Psoas muscle (tissue), 8 donors: ENCODE measurements at regions of chr2 and their contacts with region 1.

Region 1: DNA sequence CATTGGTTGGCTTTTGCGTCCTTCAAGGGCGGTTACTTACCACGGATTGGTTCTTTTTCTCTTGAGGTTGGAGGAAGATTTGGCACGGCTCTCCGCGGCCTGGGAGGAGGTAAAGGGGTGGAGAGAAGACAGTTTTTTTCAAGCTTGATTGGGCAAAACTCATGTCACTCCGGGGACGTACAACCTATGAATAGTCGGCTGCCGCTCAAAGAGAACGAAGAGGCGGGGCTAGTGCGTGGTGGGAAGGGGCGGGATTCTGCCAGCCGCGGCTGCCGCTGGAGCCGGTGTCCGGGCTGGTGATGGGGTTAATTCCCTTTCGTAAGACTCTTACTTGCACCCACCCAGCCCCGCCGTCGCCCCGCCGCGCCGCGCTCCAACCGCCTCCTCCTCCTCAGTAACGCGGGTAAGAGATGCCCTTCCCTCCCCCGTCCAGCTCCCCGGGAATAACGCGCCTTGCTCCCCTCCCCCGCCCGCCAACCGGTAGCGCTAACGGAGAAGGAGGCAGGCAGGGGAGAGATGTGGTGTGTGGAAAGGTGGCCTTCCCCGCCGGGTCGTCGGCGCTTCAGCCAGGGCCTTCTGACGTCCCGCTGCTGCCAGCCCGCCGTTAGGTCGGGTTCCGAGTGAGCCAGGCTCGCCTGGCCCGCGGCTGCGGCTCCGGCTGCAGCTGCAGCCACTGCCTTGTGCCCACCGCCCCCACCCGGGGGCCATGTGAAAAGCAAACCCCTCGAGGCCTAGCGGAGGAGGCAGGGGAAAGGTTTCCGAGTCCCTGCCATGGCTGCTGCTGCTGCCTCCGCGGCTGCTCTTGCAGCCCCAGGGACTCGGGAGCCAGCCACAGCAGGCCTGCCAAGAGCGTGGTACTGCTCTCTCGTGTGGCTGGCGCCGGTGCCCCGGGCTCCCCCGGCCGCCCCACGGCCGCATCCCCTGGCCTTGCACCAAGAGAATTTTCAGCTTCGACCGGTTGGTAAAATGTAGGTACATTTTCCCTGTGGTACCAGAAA is at the start of gene R3HDM1:
- DNase-seq: peak; percentile 96 to 98
- ATAC-seq: peak; percentile 91 to 94 (median 92)
- H3K4me3 ChIP-seq: peak within 1 kb of the TSS; percentile 79
- H3K27ac ChIP-seq: peak within 1 kb of the TSS; percentile 97
- H3K4me1 ChIP-seq: peaks cover 17% of the 10 kb centered on the region
- H3K27me3 ChIP-seq: no peaks in the 10 kb centered on the region
- CTCF ChIP-seq: no peak
- total RNA-seq, gene R3HDM1: 17.5 to 25.3 (median 22.1) TPM

Region 2: DNA sequence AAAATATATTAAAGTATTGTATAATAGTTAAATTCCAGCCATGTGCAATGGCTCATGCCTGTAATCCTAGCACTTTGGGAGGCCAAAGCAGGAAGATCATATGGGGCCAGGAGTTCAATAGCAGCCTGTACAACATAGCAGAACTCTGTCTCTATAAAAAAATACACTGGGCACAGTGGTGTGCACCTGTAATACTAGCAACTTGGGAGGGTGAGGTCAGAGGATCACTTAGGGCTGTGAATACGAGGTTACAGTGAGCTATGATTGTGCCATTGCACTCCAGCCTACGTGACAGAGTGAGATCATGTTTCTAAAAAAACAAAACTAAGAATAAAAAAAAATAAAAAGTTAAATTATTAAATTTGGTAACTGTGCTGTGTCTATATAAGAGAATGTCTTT is 36.6 kb before region 1 on chr2:
- intact Hi-C with region 1: loop called in 1 of 2 experiments (anchors 5 kb)
- DNase-seq: no peak
- ATAC-seq: peak; percentile 94 to 98 (median 97)
- H3K4me3 ChIP-seq: no peak overlapping the region
- H3K27ac ChIP-seq: peak overlapping the region; percentile 88
- H3K4me1 ChIP-seq: peaks cover 7% of the 10 kb centered on the region
- H3K27me3 ChIP-seq: no peaks in the 10 kb centered on the region
- CTCF ChIP-seq: no peak

Region 3: DNA sequence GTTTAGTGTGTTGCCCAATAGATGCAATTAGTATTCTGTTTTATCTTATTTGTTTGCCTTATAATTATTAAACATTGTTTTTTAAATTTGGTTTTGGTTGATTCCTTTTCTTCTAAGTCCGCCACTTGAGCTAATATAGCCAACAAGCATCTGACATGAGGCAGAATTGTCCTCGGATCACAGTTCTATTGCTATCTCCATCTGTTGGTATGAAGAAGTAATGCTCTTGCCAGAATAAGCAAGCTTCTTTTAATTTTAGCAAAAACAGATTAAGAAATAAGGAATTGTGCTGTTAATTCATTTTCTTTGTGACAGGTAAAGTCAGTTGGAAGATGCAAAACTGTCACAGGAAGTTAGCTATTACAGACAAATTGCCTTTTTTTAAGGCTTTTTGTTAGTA is 54.1 kb after region 1 on chr2:
- intact Hi-C with region 1: loop called in 1 of 2 experiments (anchors 10 kb)
- DNase-seq: no peak
- ATAC-seq: no peak
- H3K4me3 ChIP-seq: no peak overlapping the region
- H3K27ac ChIP-seq: no peak overlapping the region
- H3K4me1 ChIP-seq: peaks cover 22% of the 10 kb centered on the region
- H3K27me3 ChIP-seq: no peaks in the 10 kb centered on the region
- CTCF ChIP-seq: no peak

Region 4: GRCh38 chr2:135741395-135742324 is 210.1 kb after region 1 on chr2 and contains the start of gene UBXN4:
- intact Hi-C with region 1: loop called in 1 of 2 experiments (anchors 10 kb)
- DNase-seq: peak; percentile 97 to 99
- ATAC-seq: peak; percentile 94 to 96 (median 96)
- H3K4me3 ChIP-seq: peak within 1 kb of the TSS; percentile 97
- H3K27ac ChIP-seq: peak within 1 kb of the TSS; percentile 100
- H3K4me1 ChIP-seq: peaks cover 36% of the 10 kb centered on the region
- H3K27me3 ChIP-seq: no peaks in the 10 kb centered on the region
- CTCF ChIP-seq: peak; percentile 43
- total RNA-seq, gene UBXN4: 73.3 to 101 (median 96.0) TPM

Region 5: GRCh38 chr2:136281281-136282114 is 750.0 kb after region 1 on chr2:
- intact Hi-C with region 1: no loop called
- DNase-seq: no peak
- ATAC-seq: no peak
- H3K4me3 ChIP-seq: no peak overlapping the region
- H3K27ac ChIP-seq: no peak overlapping the region
- H3K4me1 ChIP-seq: no peaks in the 10 kb centered on the region
- H3K27me3 ChIP-seq: no peaks in the 10 kb centered on the region
- CTCF ChIP-seq: no peak